ENCODE measurements at regions of chr11 and their contacts with region 1.

Region 1: GRCh38 chr11:34149786-34150185 is 44.4 kb downstream of the NAT10 start:
- DNase-seq: peak; percentile 79
- H3K4me3 ChIP-seq: no peak overlapping the region
- H3K27ac ChIP-seq: no peak overlapping the region
- H3K4me1 ChIP-seq: peaks cover 0 to 28% of the 10 kb centered on the region in 2 experiments; a peak in 3 of 4 replicates
- H3K27me3 ChIP-seq: no peaks in the 10 kb centered on the region
- CTCF ChIP-seq: peak; percentile 55
- EP300 ChIP-seq: no peak
- RAD21 ChIP-seq: peak; percentile 73

Region 2: DNA sequence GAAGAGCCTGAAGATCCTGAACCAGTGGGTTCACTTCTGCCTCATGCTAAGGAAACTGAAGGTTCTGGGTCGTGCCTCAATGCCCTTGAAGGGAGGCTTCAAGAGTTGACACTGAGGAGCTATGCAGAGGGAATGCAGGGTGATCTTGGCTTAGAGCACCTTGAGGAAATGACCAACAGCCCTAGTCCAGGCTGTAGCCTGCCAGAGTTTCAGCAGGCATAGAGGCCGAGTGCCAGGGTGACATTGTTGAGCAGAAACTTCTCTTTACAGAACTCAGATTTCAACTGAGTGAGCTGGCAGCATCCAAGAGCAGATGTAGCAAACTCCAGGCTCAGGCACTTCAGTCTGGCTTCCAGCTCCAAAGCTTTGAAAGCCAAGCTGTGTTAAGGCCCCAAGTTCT is 121.4 kb before region 1 on chr11:
- CTCF ChIA-PET with region 1: no interaction called
- POLR2A ChIA-PET with region 1: no interaction called
- DNase-seq: no peak
- H3K4me3 ChIP-seq: no peak overlapping the region
- H3K27ac ChIP-seq: no peak overlapping the region
- H3K4me1 ChIP-seq: peaks cover 0 to 18% of the 10 kb centered on the region in 2 experiments; a peak in 1 of 4 replicates
- H3K27me3 ChIP-seq: no peaks in the 10 kb centered on the region
- CTCF ChIP-seq: no peak
- EP300 ChIP-seq: no peak
- RAD21 ChIP-seq: no peak

Region 3: DNA sequence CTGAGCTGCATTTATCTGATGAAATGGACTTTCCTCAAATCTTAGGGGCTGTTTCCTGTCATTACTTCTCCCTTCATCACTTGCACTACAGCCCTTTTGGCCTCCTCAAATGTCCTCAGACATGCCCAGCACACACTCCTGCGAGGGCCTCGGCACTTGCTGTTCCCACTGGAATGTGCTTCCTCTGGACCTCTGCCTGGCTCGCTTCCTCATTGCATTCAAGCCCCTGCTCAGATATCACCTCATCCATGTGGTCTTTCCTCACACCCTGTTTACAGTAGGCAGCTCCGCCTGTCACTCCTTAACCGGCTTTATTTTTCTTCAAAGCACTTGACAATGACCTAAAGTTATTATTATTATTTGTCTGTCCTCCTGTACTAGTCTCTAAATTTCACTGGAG is 35.3 kb before region 1 on chr11:
- CTCF ChIA-PET with region 1: no interaction called
- POLR2A ChIA-PET with region 1: no interaction called
- DNase-seq: no peak
- H3K4me3 ChIP-seq: no peak overlapping the region
- H3K27ac ChIP-seq: no peak overlapping the region
- H3K4me1 ChIP-seq: no peaks in the 10 kb centered on the region
- H3K27me3 ChIP-seq: no peaks in the 10 kb centered on the region
- CTCF ChIP-seq: no peak
- EP300 ChIP-seq: no peak
- RAD21 ChIP-seq: no peak

Region 4: GRCh38 chr11:34134765-34135164 is 15.0 kb before region 1 on chr11:
- CTCF ChIA-PET with region 1: interaction called, 10 read pairs
- POLR2A ChIA-PET with region 1: no interaction called
- DNase-seq: no peak
- H3K4me3 ChIP-seq: no peak overlapping the region
- H3K27ac ChIP-seq: no peak overlapping the region
- H3K4me1 ChIP-seq: no peaks in the 10 kb centered on the region
- H3K27me3 ChIP-seq: no peaks in the 10 kb centered on the region
- CTCF ChIP-seq: no peak
- EP300 ChIP-seq: no peak
- RAD21 ChIP-seq: no peak

Region 5: DNA sequence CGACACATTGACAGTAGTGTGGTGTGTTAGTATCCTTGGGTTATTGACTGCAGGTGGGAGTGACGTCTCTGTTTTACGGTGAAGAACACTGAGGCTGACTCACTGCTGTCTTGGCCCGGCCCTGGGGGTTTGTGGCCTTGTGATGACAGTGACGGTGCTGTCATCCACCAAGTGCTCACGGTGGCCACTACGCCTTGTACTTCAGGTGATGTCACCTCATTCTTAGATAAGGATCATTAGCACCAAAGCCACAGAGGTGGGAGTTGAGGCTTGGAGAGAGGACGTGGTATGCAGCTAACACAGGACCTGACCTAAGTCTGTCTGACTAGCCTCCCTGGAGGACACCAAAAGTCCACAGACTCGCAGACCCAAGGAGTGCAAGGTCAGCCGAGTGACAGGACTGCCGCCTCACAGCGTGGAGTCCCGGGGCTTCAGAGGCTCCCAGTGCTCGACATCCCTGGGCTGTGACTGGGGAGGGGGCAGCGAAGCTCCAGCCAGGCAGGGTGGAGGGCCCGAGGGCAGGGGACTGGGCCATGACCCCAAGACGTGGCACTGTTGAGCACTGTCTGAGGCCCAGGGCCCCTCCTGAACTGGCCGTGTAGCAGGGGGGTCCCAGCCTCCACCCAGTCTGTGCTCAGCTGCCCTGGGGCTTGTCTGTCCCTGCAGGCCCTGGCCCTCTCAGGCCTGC is 12.2 kb after region 1 on chr11:
- CTCF ChIA-PET with region 1: interaction called, 16 read pairs
- POLR2A ChIA-PET with region 1: interaction called, 6 read pairs
- DNase-seq: no peak
- H3K4me3 ChIP-seq: no peak overlapping the region
- H3K27ac ChIP-seq: peak overlapping the region in 1 of 2 experiments; percentile 34; a peak in 1 of 4 replicates
- H3K4me1 ChIP-seq: peaks cover 0 to 60% of the 10 kb centered on the region in 2 experiments; a peak in 1 of 4 replicates
- H3K27me3 ChIP-seq: no peaks in the 10 kb centered on the region
- CTCF ChIP-seq: no peak
- EP300 ChIP-seq: no peak
- RAD21 ChIP-seq: no peak

Region 6: GRCh38 chr11:34234086-34234740 is 84.4 kb after region 1 on chr11:
- CTCF ChIA-PET with region 1: no interaction called
- POLR2A ChIA-PET with region 1: no interaction called
- DNase-seq: no peak
- H3K4me3 ChIP-seq: no peak overlapping the region
- H3K27ac ChIP-seq: 0 out of 4 replicates have a peak overlapping the region, but pooled peaks of 1 of the 2 experiments have one; percentile 27
- H3K4me1 ChIP-seq: peaks cover 9 to 13% of the 10 kb centered on the region in 2 experiments; a peak in 2 of 4 replicates
- H3K27me3 ChIP-seq: no peaks in the 10 kb centered on the region
- CTCF ChIP-seq: no peak
- EP300 ChIP-seq: peak in 1 of 2 experiments; percentile 36; a peak in 1 of 4 replicates
- RAD21 ChIP-seq: no peak

Region 7: DNA sequence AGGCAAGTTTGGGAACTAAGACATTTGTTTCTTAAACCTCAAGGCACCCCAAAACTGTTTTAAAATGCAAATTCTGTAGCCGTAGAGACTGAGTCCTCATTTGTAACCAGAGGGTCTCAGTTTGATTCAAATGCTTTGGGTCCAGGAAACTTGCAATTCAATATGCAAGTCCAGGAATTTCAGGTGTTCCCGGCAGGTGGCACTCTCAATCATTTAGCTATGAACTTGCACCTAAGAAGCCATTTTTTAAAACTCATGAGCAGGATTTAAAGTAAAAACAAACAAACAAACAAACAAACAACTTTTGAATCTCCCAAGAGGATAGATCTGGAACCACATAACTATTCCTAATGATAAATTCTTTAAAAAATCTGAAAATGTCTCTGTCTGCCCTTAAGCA is 216.7 kb after region 1 on chr11:
- CTCF ChIA-PET with region 1: interaction called, 14 read pairs
- POLR2A ChIA-PET with region 1: no interaction called
- DNase-seq: peak; percentile 36
- H3K4me3 ChIP-seq: no peak overlapping the region
- H3K27ac ChIP-seq: no peak overlapping the region
- H3K4me1 ChIP-seq: peaks cover 0 to 7% of the 10 kb centered on the region in 2 experiments; a peak in 2 of 4 replicates
- H3K27me3 ChIP-seq: no peaks in the 10 kb centered on the region
- CTCF ChIP-seq: peak; percentile 42
- EP300 ChIP-seq: no peak
- RAD21 ChIP-seq: peak; percentile 59

Measured in SK-N-SH (cell line).